Heart left ventricle (tissue), 16 donors: ENCODE measurements at regions of chr2 and their contacts with region 1.

Region 1: GRCh38 chr2:165293440-165294353 is 54.5 kb downstream of the SCN2A start:
- DNase-seq: peak in 2 of 5 donors; percentile 30 to 60
- ATAC-seq: peak; percentile 95 to 99 (median 98)
- H3K4me3 ChIP-seq: no peak overlapping the region
- H3K27ac ChIP-seq: no peak overlapping the region
- H3K4me1 ChIP-seq: peaks cover 0 to 4% (median 0%) of the 10 kb centered on the region in 12 donors
- H3K27me3 ChIP-seq: no peaks in the 10 kb centered on the region
- CTCF ChIP-seq: peak; percentile 64 to 84 (median 76)
- POLR2A ChIP-seq: no peak

Region 2: DNA sequence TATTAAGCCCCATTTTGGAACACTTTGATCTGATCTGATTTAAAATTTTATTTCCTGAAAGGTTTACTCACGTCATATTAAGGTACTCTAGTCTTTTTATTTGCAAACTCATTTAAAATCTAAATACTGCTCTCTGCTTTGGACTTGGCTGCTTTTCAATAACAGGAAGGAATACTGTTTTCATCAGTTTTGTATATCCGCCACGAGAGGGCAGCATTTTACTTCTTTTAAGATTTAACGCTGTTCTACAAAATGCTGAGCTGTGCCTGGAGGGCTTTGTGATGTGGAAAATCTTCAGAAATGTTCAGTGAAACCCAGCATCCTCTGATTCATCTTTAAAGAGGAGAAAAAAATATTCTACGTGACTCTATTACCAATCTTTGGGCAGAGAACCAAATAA is 300.9 kb before region 1 on chr2:
- intact Hi-C with region 1: loop called in 4 of 10 experiments (anchors 5 to 10 kb)
- DNase-seq: peak in 2 of 5 donors; percentile 55 to 60
- ATAC-seq: peak in 3 of 4 donors; percentile 54 to 74 (median 66)
- H3K4me3 ChIP-seq: no peak overlapping the region
- H3K27ac ChIP-seq: no peak overlapping the region
- H3K4me1 ChIP-seq: peaks cover 0 to 18% (median 7%) of the 10 kb centered on the region in 12 donors
- H3K27me3 ChIP-seq: no peaks in the 10 kb centered on the region
- CTCF ChIP-seq: peak; percentile 40 to 77 (median 60)
- POLR2A ChIP-seq: no peak

Region 3: GRCh38 chr2:165008730-165009315 is 284.9 kb before region 1 on chr2:
- intact Hi-C with region 1: loop called in 6 of 10 experiments (anchors 5 to 10 kb)
- DNase-seq: no peak
- ATAC-seq: no peak
- H3K4me3 ChIP-seq: no peak overlapping the region
- H3K27ac ChIP-seq: no peak overlapping the region
- H3K4me1 ChIP-seq: no peaks in the 10 kb centered on the region
- H3K27me3 ChIP-seq: peaks cover 0 to 10% (median 0%) of the 10 kb centered on the region in 9 donors
- CTCF ChIP-seq: no peak
- POLR2A ChIP-seq: no peak

Region 4: DNA sequence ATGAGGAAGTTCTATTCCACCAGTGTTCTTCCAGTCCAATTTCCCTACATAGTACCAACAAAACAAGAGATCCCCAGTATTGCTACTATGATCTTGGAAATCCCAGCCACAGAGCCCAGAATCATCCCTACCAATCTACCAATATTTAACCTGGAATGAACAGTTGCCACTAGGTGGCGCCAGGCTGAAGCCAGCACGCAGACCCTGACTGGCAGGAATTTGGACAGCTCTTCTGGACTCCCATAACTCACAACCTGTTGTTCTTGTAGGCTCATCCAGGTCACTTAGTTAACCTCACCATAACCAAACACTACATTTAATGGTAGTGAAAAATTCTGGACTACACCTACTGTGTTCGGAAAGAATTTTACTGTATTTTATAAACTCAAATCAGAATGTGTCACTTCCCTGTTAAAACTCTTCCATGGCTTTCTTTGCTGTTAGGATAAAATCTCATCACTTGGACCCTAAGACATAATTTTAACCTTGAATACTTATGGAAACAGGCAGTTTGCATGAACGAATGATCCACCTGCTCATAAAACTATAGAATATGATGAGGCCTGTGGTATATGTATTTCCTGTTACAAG is 278.6 kb before region 1 on chr2:
- intact Hi-C with region 1: loop called in 6 of 10 experiments (anchors 5 to 10 kb)
- DNase-seq: peak; percentile 50 to 68 (median 64)
- ATAC-seq: peak; percentile 42 to 69 (median 64)
- H3K4me3 ChIP-seq: no peak overlapping the region
- H3K27ac ChIP-seq: no peak overlapping the region
- H3K4me1 ChIP-seq: peaks cover 0 to 6% (median 0%) of the 10 kb centered on the region in 12 donors
- H3K27me3 ChIP-seq: peaks cover 0 to 8% (median 0%) of the 10 kb centered on the region in 9 donors
- CTCF ChIP-seq: peak; percentile 73 to 90 (median 86)
- POLR2A ChIP-seq: no peak

Region 5: GRCh38 chr2:165239230-165239629 is 54.5 kb before region 1 on chr2 and contains the start of gene SCN2A:
- intact Hi-C with region 1: loop called (anchors 1 to 5 kb)
- DNase-seq: no peak
- ATAC-seq: peak in 1 of 4 donors; percentile 53
- H3K4me3 ChIP-seq: no peak within 1 kb of the TSS
- H3K27ac ChIP-seq: no peak within 1 kb of the TSS
- H3K4me1 ChIP-seq: no peaks in the 10 kb centered on the region
- H3K27me3 ChIP-seq: peaks cover 0 to 4% (median 0%) of the 10 kb centered on the region in 9 donors
- CTCF ChIP-seq: peak; percentile 57 to 76 (median 66)
- POLR2A ChIP-seq: no peak
- total RNA-seq, gene SCN2A: 0.04 to 0.45 (median 0.17) TPM in 5 of 9 donors, not detected in the others

Region 6: GRCh38 chr2:165274698-165275097 is 19.0 kb before region 1 on chr2:
- intact Hi-C with region 1: loop called in 1 of 10 experiments (anchors 2 kb)
- DNase-seq: peak; percentile 70 to 88 (median 72)
- ATAC-seq: peak; percentile 92 to 99 (median 98)
- H3K4me3 ChIP-seq: no peak overlapping the region
- H3K27ac ChIP-seq: peak overlapping the region in 11 of 12 donors; percentile 7 to 75 (median 52)
- H3K4me1 ChIP-seq: peaks cover 0 to 20% (median 6%) of the 10 kb centered on the region in 12 donors
- H3K27me3 ChIP-seq: no peaks in the 10 kb centered on the region
- CTCF ChIP-seq: no peak
- POLR2A ChIP-seq: no peak

Region 7: DNA sequence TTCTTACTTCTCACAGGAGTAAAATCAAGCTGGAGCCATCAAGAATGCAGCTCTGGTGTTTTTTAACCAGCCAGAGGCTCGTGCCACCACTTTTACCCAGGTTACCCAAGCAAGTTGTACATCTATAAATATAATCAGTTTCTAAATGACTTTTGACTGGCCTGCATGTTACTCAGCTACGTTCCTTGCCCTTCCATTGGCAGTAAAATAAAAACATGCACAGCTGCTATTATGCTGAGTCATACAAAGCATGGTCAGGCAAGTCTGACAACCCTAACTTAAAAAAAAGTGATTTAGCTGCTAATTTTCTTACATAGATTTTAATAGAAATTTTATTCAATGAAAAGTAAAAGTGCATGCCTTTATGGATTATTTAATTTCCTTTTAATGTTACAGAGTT is 64.1 kb after region 1 on chr2:
- intact Hi-C with region 1: no loop called
- DNase-seq: no peak
- ATAC-seq: no peak
- H3K4me3 ChIP-seq: no peak overlapping the region
- H3K27ac ChIP-seq: no peak overlapping the region
- H3K4me1 ChIP-seq: no peaks in the 10 kb centered on the region
- H3K27me3 ChIP-seq: no peaks in the 10 kb centered on the region
- CTCF ChIP-seq: no peak
- POLR2A ChIP-seq: no peak